Tibial artery (tissue), 4 donors: ENCODE measurements at regions of chr4 and their contacts with region 1.

Region 1: GRCh38 chr4:16289897-16290554 is 63.8 kb upstream of the TAPT1 start:
- DNase-seq: no peak
- H3K4me3 ChIP-seq: no peak overlapping the region
- H3K27ac ChIP-seq: no peak overlapping the region
- H3K4me1 ChIP-seq: peaks cover 0 to 4% (median 0%) of the 10 kb centered on the region in 4 donors
- H3K27me3 ChIP-seq: peaks cover 0 to 10% of the 10 kb centered on the region in 2 donors
- CTCF ChIP-seq: peak; percentile 50 to 54

Region 2: GRCh38 chr4:17475481-17475880 is 1185.5 kb after region 1 on chr4:
- intact Hi-C with region 1: loop called (anchors 10 kb)
- DNase-seq: no peak
- H3K4me3 ChIP-seq: no peak overlapping the region
- H3K27ac ChIP-seq: no peak overlapping the region
- H3K4me1 ChIP-seq: no peaks in the 10 kb centered on the region
- H3K27me3 ChIP-seq: no peaks in the 10 kb centered on the region
- CTCF ChIP-seq: no peak